ENCODE measurements at regions of chr2 and their contacts with region 1.

Region 1: GRCh38 chr2:219057709-219058540 is 2.8 kb downstream of the IHH start:
- DNase-seq: peak; percentile 45 to 82 (median 68)
- ATAC-seq: peak; percentile 94
- H3K4me3 ChIP-seq: peak overlapping the region; percentile 27
- H3K4me3 Mint-ChIP-seq: peak overlapping the region; percentile 40 to 82 (median 57)
- H3K27ac ChIP-seq: no peak overlapping the region
- H3K27ac Mint-ChIP-seq: no peak overlapping the region
- H3K4me1 ChIP-seq: peaks cover 3 to 27% of the 10 kb centered on the region in 2 donors
- H3K4me1 Mint-ChIP-seq: peaks cover 8 to 22% (median 16%) of the 10 kb centered on the region in 7 donors
- H3K27me3 ChIP-seq: peaks cover 15 to 16% of the 10 kb centered on the region in 2 donors
- H3K27me3 Mint-ChIP-seq: peaks cover 50 to 75% (median 53%) of the 10 kb centered on the region in 5 donors

Region 2: GRCh38 chr2:218312267-218312756 is 745.6 kb before region 1 on chr2:
- CTCF ChIA-PET with region 1: no interaction called
- POLR2A ChIA-PET with region 1: no interaction called
- intact Hi-C with region 1: no loop called
- DNase-seq: no peak
- ATAC-seq: no peak
- H3K4me3 ChIP-seq: no peak overlapping the region
- H3K4me3 Mint-ChIP-seq: no peak overlapping the region
- H3K27ac ChIP-seq: no peak overlapping the region
- H3K27ac Mint-ChIP-seq: peak overlapping the region in 8 of 9 donors; percentile 36 to 88 (median 67)
- H3K4me1 ChIP-seq: peaks cover 15 to 17% of the 10 kb centered on the region in 2 donors
- H3K4me1 Mint-ChIP-seq: peaks cover 17 to 44% (median 40%) of the 10 kb centered on the region in 7 donors
- H3K27me3 ChIP-seq: no peaks in the 10 kb centered on the region
- H3K27me3 Mint-ChIP-seq: peaks cover 0 to 2% (median 0%) of the 10 kb centered on the region in 5 donors

Region 3: GRCh38 chr2:218995972-218996711 is 61.8 kb before region 1 on chr2:
- CTCF ChIA-PET with region 1: no interaction called
- POLR2A ChIA-PET with region 1: no interaction called
- intact Hi-C with region 1: loop called in 1 of 2 experiments (anchors 5 kb)
- DNase-seq: peak; percentile 38 to 85 (median 63)
- ATAC-seq: peak; percentile 90
- H3K4me3 ChIP-seq: no peak overlapping the region
- H3K4me3 Mint-ChIP-seq: peak overlapping the region in 6 of 10 donors; percentile 29 to 66 (median 45)
- H3K27ac ChIP-seq: no peak overlapping the region
- H3K27ac Mint-ChIP-seq: no peak overlapping the region
- H3K4me1 ChIP-seq: peaks cover 0 to 7% of the 10 kb centered on the region in 2 donors
- H3K4me1 Mint-ChIP-seq: peaks cover 0 to 15% (median 7%) of the 10 kb centered on the region in 7 donors
- H3K27me3 ChIP-seq: peaks cover 5 to 33% of the 10 kb centered on the region in 2 donors
- H3K27me3 Mint-ChIP-seq: peaks cover 57 to 88% (median 64%) of the 10 kb centered on the region in 5 donors

Region 4: GRCh38 chr2:219104107-219105035 is 46.4 kb after region 1 on chr2:
- CTCF ChIA-PET with region 1: no interaction called
- POLR2A ChIA-PET with region 1: no interaction called
- intact Hi-C with region 1: loop called in 1 of 2 experiments (anchors 5 kb)
- DNase-seq: peak in 2 of 9 donors; percentile 2 to 3
- ATAC-seq: peak; percentile 79
- H3K4me3 ChIP-seq: no peak overlapping the region
- H3K4me3 Mint-ChIP-seq: no peak overlapping the region
- H3K27ac ChIP-seq: no peak overlapping the region
- H3K27ac Mint-ChIP-seq: peak overlapping the region in 1 of 9 donors; percentile 14
- H3K4me1 ChIP-seq: no peaks in the 10 kb centered on the region
- H3K4me1 Mint-ChIP-seq: peaks cover 11 to 36% (median 24%) of the 10 kb centered on the region in 7 donors
- H3K27me3 ChIP-seq: no peaks in the 10 kb centered on the region
- H3K27me3 Mint-ChIP-seq: no peaks in the 10 kb centered on the region

Region 5: GRCh38 chr2:219155054-219155644 is 97.2 kb after region 1 on chr2:
- CTCF ChIA-PET with region 1: interaction called, 43 read pairs
- POLR2A ChIA-PET with region 1: interaction called, 3 read pairs
- intact Hi-C with region 1: loop called (anchors 1 kb)
- DNase-seq: peak in 7 of 9 donors; percentile 35 to 58 (median 54)
- ATAC-seq: peak; percentile 53
- H3K4me3 ChIP-seq: no peak overlapping the region
- H3K4me3 Mint-ChIP-seq: no peak overlapping the region
- H3K27ac ChIP-seq: no peak overlapping the region
- H3K27ac Mint-ChIP-seq: no peak overlapping the region
- H3K4me1 ChIP-seq: peaks cover 5 to 6% of the 10 kb centered on the region in 2 donors
- H3K4me1 Mint-ChIP-seq: peaks cover 7 to 21% (median 13%) of the 10 kb centered on the region in 7 donors
- H3K27me3 ChIP-seq: no peaks in the 10 kb centered on the region
- H3K27me3 Mint-ChIP-seq: no peaks in the 10 kb centered on the region

Region 6: DNA sequence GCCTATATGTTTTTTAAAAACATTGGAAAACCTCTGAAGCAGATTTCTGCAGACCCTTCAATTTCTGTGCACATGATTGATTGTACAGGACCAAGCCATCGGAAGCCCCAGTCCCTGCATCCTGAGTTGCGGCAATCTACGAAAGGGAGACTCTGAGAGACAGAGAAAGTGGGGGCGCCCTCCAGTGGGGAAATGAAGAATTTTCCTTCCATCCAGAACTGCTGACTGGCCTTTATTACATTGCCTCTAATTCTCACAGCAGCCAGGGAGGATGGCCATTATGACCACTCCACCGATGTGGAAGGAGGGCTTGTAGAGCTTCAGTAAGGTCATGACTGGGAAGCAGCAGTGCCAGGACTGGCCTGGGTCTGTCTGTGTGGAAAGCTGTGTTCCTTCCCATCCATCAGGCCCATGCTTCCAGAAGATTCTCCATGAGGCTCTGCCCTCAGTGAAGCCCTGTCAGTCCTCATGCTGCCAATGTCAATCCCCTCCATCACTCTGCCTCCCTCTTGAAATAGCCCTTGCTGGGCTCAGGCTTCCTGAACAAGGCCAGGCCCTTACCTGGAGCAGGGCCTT is 294.6 kb after region 1 on chr2:
- CTCF ChIA-PET with region 1: no interaction called
- POLR2A ChIA-PET with region 1: no interaction called
- intact Hi-C with region 1: loop called in 1 of 2 experiments (anchors 1 kb)
- DNase-seq: peak; percentile 25 to 66 (median 58)
- ATAC-seq: peak; percentile 87
- H3K4me3 ChIP-seq: no peak overlapping the region
- H3K4me3 Mint-ChIP-seq: no peak overlapping the region
- H3K27ac ChIP-seq: no peak overlapping the region
- H3K27ac Mint-ChIP-seq: no peak overlapping the region
- H3K4me1 ChIP-seq: no peaks in the 10 kb centered on the region
- H3K4me1 Mint-ChIP-seq: no peaks in the 10 kb centered on the region
- H3K27me3 ChIP-seq: no peaks in the 10 kb centered on the region
- H3K27me3 Mint-ChIP-seq: peaks cover 43 to 64% (median 48%) of the 10 kb centered on the region in 5 donors